AG04449 (cell line): ENCODE measurements at regions of chr1 and their contacts with region 1.

Region 1: DNA sequence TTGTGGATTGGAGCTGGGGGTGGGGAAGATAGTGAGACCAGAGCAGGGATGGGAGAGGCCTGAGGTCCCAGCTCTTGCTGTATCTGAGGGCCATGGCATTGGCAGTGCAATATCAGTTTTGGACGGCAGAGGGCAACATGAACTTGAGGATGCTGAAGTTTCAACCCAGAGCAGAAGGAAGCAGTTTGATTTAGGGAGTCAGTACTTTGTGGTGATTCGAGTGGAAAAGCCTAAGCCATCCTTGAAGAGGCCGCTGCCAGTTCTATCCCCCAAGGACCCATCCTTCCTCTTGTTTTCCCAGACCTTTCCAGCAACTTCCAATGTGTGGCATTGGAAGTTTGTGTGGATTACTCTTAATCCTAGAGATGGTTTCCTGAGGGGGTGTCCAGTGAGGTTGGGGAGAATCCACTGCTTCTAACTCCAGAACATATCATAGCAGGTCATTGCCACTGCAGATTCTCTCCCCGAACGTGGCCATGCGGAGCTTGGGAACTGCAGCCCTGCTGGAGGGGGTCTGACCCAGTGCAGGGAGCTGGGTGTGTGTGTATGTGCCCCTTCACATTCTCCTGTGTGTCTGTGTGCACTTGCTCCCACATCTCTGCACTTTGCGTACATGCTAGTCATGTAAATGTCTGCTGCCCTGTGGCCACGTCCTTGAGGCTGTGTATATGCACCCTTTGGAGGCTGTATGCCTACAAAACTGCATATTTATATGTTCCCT is 24.1 kb downstream of the SLC26A9 start:
- DNase-seq: peak; percentile 63
- H3K4me3 ChIP-seq: no peak overlapping the region
- CTCF ChIP-seq: peak; percentile 89

Region 2: DNA sequence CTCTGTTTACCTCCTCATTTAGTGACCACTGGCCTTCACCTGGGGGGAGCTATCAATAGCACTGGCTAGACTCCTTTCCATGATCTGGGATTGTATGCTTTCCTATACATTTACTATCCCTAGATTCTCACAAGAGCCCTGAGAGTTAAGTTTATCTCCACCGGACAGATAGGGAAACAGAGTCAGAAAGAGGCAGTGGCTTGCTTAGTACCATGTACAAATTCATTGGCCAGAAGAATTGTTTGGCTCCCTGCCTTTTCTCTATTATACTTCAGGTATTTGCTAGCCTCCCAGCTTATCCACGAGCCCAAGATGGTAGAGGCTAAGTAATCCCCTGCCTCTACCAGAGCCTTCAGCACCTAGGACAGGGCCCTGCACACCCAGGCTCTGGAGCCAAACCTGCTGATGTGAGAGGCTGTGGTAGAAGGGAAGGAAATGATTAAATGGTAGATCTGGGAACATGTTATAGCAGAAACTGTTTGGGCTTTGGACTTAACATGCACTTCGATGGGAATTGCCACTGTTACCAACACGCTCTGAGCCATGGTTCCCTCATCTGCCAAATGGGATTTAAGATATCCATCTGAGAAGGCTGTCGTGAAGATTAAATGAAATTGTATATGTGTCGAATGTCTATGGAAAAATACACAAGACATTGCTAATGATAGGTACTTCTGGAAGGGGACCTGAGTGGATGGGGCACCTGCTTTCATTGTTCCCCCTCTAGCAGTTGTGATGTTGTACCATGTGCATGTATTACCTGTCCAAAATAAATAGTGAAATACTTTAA is 460.2 kb before region 1 on chr1:
- CTCF ChIA-PET with region 1: no interaction called
- POLR2A ChIA-PET with region 1: no interaction called
- DNase-seq: no peak
- H3K4me3 ChIP-seq: no peak overlapping the region
- CTCF ChIP-seq: no peak

Region 3: DNA sequence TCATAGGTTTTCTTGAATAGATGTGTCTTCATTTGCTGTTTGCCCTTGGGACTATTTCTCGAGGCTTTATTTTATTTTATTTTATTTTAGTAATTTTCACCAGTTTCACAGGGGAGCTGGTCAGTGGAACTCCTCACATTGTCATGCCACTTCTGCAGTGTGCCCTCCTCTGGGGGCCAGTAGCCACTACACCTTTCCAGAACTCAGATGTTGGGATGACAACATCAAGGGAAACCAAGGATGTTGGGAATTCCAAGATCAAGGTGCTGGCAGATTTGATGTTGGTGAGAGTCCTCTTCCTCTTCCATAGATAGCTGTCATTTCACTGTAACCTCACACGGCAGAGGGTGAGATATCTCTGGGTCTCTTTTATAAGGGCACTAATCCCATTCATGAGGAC is 11.4 kb before region 1 on chr1:
- CTCF ChIA-PET with region 1: interaction called, 39 read pairs
- POLR2A ChIA-PET with region 1: no interaction called
- DNase-seq: no peak
- H3K4me3 ChIP-seq: no peak overlapping the region
- CTCF ChIP-seq: peak; percentile 73

Region 4: DNA sequence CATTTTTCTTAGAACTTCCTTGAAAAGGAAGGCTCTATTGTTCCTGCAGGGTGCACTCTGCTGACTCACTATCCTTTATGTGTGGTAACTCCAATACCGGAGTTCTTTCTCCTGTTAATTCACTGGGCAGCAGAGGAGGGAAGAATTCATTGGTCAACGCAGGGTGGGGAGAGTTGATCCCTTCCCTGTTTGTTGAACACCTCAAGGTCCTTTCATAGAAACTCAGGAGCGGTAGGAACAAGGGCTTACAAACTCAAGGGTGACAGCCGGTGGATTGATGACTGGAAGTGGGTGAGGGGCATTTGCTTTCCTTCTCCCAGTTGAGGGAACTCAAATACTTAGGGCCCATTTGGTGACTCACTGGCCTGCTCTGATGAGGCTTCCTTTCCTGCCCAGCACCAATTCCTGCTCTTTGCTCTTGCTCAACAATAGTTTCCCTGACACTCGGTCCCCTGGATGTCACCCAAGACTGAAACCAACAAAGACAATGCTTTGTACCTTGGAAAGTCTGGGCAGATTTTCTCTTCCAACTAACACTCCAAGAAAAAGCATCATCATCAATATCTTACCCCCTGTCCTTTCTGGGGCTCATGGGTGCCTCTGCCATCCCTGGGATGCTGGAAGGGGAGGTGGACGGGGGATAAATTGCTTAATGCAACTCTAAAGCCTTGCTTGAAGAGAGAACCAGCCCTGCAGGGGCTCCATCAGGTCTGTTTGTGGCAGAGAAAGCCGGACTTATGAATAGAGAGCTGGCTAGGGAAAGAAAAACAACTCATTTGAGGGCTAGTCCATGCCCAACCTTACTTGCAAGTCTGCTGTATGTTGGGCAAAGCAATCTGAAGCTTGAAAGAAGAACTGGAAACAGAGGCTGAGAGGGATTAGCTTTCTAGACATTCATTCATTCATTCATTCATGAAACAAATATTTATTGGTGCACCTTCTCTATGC is 14.8 kb after region 1 on chr1:
- CTCF ChIA-PET with region 1: interaction called, 89 read pairs
- POLR2A ChIA-PET with region 1: no interaction called
- DNase-seq: no peak
- H3K4me3 ChIP-seq: no peak overlapping the region
- CTCF ChIP-seq: no peak

Region 5: GRCh38 chr1:205950280-205950679 is 31.1 kb after region 1 on chr1:
- CTCF ChIA-PET with region 1: interaction called, 12 read pairs
- POLR2A ChIA-PET with region 1: no interaction called
- DNase-seq: no peak
- H3K4me3 ChIP-seq: no peak overlapping the region
- CTCF ChIP-seq: no peak

Region 6: DNA sequence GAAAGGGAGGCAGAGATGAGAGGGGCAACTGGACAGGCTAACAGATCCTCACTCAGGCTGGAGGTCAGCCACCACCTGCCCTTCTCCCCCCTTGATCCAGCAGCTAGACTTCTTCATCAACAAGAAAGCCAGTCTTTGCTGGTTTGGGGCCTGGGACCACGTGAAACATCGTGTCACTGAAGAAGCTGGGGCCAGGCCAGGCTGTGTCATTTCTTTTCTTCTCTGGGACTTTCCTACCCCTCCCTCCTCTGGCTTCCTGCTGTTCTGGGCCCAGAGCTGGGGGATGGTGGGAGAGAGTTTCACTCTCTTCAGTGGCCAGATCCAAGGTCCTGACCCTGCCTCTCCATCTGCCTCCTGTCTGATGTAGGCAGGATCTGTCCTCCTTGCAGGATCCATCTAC is 42.2 kb after region 1 on chr1:
- CTCF ChIA-PET with region 1: interaction called, 11 read pairs
- POLR2A ChIA-PET with region 1: no interaction called
- DNase-seq: no peak
- H3K4me3 ChIP-seq: no peak overlapping the region
- CTCF ChIP-seq: no peak